ENCODE measurements at regions of chr2 and their contacts with region 1.

Region 1: DNA sequence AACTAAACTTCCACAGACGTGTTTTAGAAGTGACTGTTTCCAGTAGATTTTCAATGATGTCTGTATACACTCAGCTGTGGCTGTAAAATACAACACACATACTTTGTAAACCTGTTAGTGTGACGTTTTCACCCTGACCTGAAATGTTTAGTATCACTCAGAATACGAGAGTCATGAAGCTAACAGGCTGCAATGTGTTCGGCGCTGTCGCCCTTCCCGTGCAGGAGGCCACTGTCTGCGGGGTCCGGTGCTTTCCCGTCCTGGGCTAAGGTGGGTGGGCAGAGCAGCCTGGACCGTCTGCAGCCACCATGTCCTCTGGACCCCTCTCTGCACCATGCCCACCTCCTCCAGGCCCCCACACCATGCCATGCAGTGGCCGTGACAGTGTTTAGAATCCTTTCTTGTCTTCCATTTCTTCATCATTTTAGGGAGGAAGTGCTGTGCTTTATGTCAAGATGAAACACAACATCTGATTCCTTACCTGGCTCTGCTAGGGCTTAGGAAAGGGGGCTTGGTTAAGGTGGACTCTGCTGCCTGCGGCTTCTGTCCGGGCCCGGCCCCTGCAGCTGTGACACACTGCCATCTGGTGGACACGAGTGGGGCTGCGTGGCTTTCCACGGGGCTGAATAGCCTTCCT is 53.8 kb upstream of the RBM44 start:
- DNase-seq: peak; percentile 73 to 76
- H3K4me3 ChIP-seq: no peak overlapping the region
- H3K27ac ChIP-seq: no peak overlapping the region
- H3K4me1 ChIP-seq: peaks cover under 1 to 32% of the 10 kb centered on the region in 2 donors
- H3K27me3 ChIP-seq: no peaks in the 10 kb centered on the region
- CTCF ChIP-seq: peak; percentile 90 to 99 (median 93)
- POLR2A ChIP-seq: no peak

Region 2: GRCh38 chr2:237512774-237513466 is 231.8 kb before region 1 on chr2:
- intact Hi-C with region 1: loop called (anchors 10 kb)
- DNase-seq: peak; percentile 93 to 94
- H3K4me3 ChIP-seq: no peak overlapping the region
- H3K27ac ChIP-seq: peak overlapping the region in 2 of 3 donors; percentile 4 to 75
- H3K4me1 ChIP-seq: peaks cover 4 to 27% of the 10 kb centered on the region in 2 donors
- H3K27me3 ChIP-seq: no peaks in the 10 kb centered on the region
- CTCF ChIP-seq: peak; percentile 69 to 98 (median 88)
- POLR2A ChIP-seq: no peak

Region 3: GRCh38 chr2:237581751-237582746 is 162.7 kb before region 1 on chr2:
- intact Hi-C with region 1: loop called (anchors 5 kb)
- DNase-seq: peak; percentile 93 to 94
- H3K4me3 ChIP-seq: no peak overlapping the region
- H3K27ac ChIP-seq: peak overlapping the region; percentile 87 to 97 (median 89)
- H3K4me1 ChIP-seq: peaks cover 25 to 27% of the 10 kb centered on the region in 2 donors
- H3K27me3 ChIP-seq: no peaks in the 10 kb centered on the region
- CTCF ChIP-seq: peak in 5 of 6 experiments; percentile 21 to 80 (median 55)
- POLR2A ChIP-seq: peak; percentile 45 to 63

Region 4: DNA sequence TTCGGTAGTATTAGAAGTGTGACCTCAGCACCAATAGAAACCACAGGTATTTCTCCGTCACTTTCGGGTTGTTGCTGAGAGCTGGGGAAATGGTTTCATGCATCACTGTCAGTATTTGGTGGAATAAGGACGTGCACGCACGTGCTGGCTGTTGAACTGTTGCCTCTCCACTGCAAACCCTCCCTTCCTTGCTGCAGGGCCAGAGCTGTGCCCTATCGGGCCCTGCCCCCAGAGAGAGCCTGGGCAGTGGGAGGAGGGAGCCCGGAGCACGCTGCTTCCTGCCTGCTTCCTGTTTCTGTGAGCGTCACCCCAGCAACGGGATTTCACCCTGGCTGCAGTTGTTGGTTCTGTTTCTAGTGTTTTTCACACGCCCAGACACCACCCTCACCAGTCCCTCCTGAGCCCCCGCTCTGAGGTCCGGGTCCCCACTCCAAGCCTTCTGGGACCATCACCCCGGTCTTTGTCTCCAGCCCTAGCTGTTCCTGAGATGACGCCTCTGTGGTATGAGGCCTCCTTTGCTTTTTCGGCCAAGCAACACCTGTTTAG is 69.9 kb before region 1 on chr2:
- intact Hi-C with region 1: loop called (anchors 5 kb)
- DNase-seq: peak; percentile 56 to 78
- H3K4me3 ChIP-seq: no peak overlapping the region
- H3K27ac ChIP-seq: peak overlapping the region in 2 of 3 donors; percentile 42 to 71
- H3K4me1 ChIP-seq: peaks cover 24 to 40% of the 10 kb centered on the region in 2 donors
- H3K27me3 ChIP-seq: no peaks in the 10 kb centered on the region
- CTCF ChIP-seq: no peak
- POLR2A ChIP-seq: no peak

Measured in thyroid gland (tissue), 4 donors.